Endothelial cell of umbilical vein (primary cell): ENCODE measurements at regions of chr6 and their contacts with region 1.

Region 1: DNA sequence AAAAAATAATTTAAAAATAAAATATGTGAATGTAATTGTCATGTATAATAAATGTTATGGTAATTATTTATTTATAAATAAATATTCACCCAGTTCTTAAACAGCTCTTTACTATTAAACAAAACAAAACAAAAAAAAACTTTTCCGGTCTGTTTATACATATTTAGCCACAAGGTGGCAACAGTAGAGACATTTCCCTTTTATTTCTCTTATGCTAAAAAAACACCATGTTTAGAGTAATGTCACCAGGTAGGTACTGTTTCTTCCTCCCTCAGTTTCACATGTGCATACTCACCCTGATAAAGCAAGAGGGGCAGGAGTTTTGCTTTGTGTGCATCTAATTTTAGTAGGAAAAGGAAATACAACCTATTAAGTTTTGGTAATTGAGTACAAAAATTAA is 610.4 kb upstream of the IMPG1 start:
- DNase-seq: peak; percentile 40
- H3K4me3 ChIP-seq: no peak overlapping the region
- H3K27ac ChIP-seq: no peak overlapping the region
- H3K4me1 ChIP-seq: peaks cover 8% of the 10 kb centered on the region
- H3K27me3 ChIP-seq: no peaks in the 10 kb centered on the region
- CTCF ChIP-seq: peak in 1 of 2 donors; percentile 22
- POLR2A ChIP-seq: no peak

Region 2: GRCh38 chr6:76633259-76633658 is 49.6 kb before region 1 on chr6:
- CTCF ChIA-PET with region 1: no interaction called
- POLR2A ChIA-PET with region 1: no interaction called
- dilution Hi-C with region 1: no loop called
- intact Hi-C with region 1: no loop called
- DNase-seq: no peak
- H3K4me3 ChIP-seq: no peak overlapping the region
- H3K27ac ChIP-seq: no peak overlapping the region
- H3K4me1 ChIP-seq: no peaks in the 10 kb centered on the region
- H3K27me3 ChIP-seq: peaks cover 0 to 2% of the 10 kb centered on the region in 2 experiments
- CTCF ChIP-seq: no peak
- POLR2A ChIP-seq: no peak

Region 3: DNA sequence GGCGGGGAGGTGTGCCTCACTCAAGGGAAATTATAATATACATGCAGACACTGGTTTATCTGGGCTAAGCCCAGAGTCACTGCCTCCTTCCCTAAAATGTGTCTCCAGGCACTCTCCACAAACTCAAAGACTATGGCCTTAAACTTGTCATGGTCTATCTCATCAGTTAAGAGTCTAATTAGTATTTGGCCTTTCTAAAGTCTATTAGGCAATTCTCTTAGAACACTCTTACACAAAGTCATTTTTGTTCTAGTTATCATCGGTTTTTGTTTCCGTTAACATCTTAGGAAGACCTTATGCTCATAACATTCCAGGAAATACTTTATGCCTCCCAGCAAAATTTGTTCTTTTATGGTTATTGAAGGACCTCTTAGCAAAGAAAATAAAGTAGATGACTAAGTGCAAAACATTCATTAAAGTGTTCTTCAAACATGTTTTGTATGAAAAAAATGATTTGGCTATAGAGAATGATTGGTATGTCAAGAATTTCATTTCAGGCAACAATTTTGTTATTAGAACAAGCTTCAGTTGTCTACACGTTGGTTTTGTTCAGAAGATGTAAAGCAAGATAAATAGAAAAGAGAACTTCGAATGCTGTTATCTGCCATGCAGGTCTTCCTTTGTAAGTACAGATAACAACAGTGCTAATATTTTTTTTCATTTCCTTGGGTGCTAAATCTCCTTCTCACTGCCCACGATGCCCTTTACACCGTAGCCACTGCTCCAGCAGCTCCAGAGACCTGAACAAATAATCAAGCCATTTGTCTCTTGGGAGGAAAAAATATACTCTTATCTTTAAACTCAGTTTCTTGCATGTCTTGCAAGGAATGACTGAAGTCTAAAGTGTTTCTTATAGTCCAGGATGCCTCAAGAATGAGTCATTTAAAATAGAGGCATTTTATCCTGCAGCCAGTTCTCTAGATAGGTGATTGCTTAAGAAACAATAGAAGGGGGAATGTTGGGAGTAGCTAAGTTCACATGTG is 610.0 kb after region 1 on chr6:
- CTCF ChIA-PET with region 1: no interaction called
- POLR2A ChIA-PET with region 1: no interaction called
- dilution Hi-C with region 1: no loop called
- intact Hi-C with region 1: loop called (anchors 5 kb)
- DNase-seq: peak; percentile 97
- H3K4me3 ChIP-seq: no peak overlapping the region
- H3K27ac ChIP-seq: peak overlapping the region; percentile 90
- H3K4me1 ChIP-seq: peaks cover 61% of the 10 kb centered on the region
- H3K27me3 ChIP-seq: no peaks in the 10 kb centered on the region
- CTCF ChIP-seq: no peak
- POLR2A ChIP-seq: no peak